ENCODE measurements at regions of chr7 and their contacts with region 1.

Region 1: DNA sequence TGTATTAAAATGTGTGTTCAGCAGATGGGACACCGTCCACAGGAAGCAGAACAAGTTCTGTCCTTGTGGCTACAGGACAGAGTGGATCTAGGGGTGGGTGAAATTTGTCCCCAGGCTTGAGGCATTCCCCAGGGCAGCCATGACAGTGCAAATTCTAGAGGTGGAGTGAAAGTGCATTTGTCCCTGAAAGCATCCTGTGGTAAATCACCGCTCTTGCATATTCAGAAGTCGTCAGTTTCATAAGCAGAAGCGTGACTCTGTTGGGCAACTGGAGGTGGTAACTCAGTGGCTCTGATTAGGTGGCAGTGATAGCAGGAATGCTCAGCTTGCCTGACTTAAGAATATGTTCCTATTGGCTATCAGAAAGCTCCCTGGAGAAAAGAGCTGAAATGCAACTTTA is 96.6 kb downstream of the SNX10 start:
- DNase-seq: no peak

Region 2: GRCh38 chr7:26515314-26515842 is 127.1 kb after region 1 on chr7:
- CTCF ChIA-PET with region 1: interaction called, 11 read pairs
- POLR2A ChIA-PET with region 1: no interaction called
- DNase-seq: no peak